HepG2 (cell line): ENCODE measurements at regions of chr9 and their contacts with region 1.

Region 1: GRCh38 chr9:78325343-78325742 is 28.4 kb downstream of the PSAT1 start:
- DNase-seq: no peak
- ATAC-seq: no peak; the same call in 2 of the 3 replicates
- H3K4me3 ChIP-seq: no peak overlapping the region
- H3K27ac ChIP-seq: no peak overlapping the region
- H3K4me1 ChIP-seq: peaks cover 7% of the 10 kb centered on the region
- H3K27me3 ChIP-seq: no peaks in the 10 kb centered on the region
- CTCF ChIP-seq: no peak
- EP300 ChIP-seq: no peak
- POLR2A ChIP-seq: no peak
- RAD21 ChIP-seq: no peak

Region 2: GRCh38 chr9:76835571-76836283 is 1489.6 kb before region 1 on chr9:
- CTCF ChIA-PET with region 1: no interaction called
- POLR2A ChIA-PET with region 1: no interaction called
- in situ Hi-C with region 1: no loop called
- intact Hi-C with region 1: no loop called
- DNase-seq: no peak
- ATAC-seq: no peak
- H3K4me3 ChIP-seq: no peak overlapping the region
- H3K27ac ChIP-seq: no peak overlapping the region
- H3K4me1 ChIP-seq: no peaks in the 10 kb centered on the region
- H3K27me3 ChIP-seq: no peaks in the 10 kb centered on the region
- CTCF ChIP-seq: no peak
- EP300 ChIP-seq: no peak
- POLR2A ChIP-seq: no peak
- RAD21 ChIP-seq: no peak

Region 3: GRCh38 chr9:78261403-78262001 is 63.8 kb before region 1 on chr9:
- CTCF ChIA-PET with region 1: no interaction called
- POLR2A ChIA-PET with region 1: no interaction called
- in situ Hi-C with region 1: no loop called
- intact Hi-C with region 1: loop called (anchors 5 kb)
- DNase-seq: peak; percentile 23
- ATAC-seq: no peak
- H3K4me3 ChIP-seq: no peak overlapping the region
- H3K27ac ChIP-seq: no peak overlapping the region
- H3K4me1 ChIP-seq: no peaks in the 10 kb centered on the region
- H3K27me3 ChIP-seq: no peaks in the 10 kb centered on the region
- CTCF ChIP-seq: peak; percentile 66
- EP300 ChIP-seq: no peak
- POLR2A ChIP-seq: no peak
- RAD21 ChIP-seq: peak; percentile 20; the same call in 1 of the 2 replicates

Region 4: GRCh38 chr9:78280982-78281668 is 44.2 kb before region 1 on chr9:
- CTCF ChIA-PET with region 1: no interaction called
- POLR2A ChIA-PET with region 1: interaction called, 3 read pairs
- in situ Hi-C with region 1: no loop called
- intact Hi-C with region 1: loop called (anchors 5 kb)
- DNase-seq: peak; percentile 35
- ATAC-seq: peak; percentile 81
- H3K4me3 ChIP-seq: no peak overlapping the region
- H3K27ac ChIP-seq: peak overlapping the region; percentile 51
- H3K4me1 ChIP-seq: peaks cover 50% of the 10 kb centered on the region
- H3K27me3 ChIP-seq: no peaks in the 10 kb centered on the region
- CTCF ChIP-seq: no peak
- EP300 ChIP-seq: no peak
- POLR2A ChIP-seq: no peak
- RAD21 ChIP-seq: no peak

Region 5: GRCh38 chr9:78507037-78507436 is 181.7 kb after region 1 on chr9:
- CTCF ChIA-PET with region 1: no interaction called
- POLR2A ChIA-PET with region 1: no interaction called
- in situ Hi-C with region 1: no loop called
- intact Hi-C with region 1: no loop called
- DNase-seq: no peak
- ATAC-seq: no peak
- H3K4me3 ChIP-seq: no peak overlapping the region
- H3K27ac ChIP-seq: no peak overlapping the region
- H3K4me1 ChIP-seq: no peaks in the 10 kb centered on the region
- H3K27me3 ChIP-seq: no peaks in the 10 kb centered on the region
- CTCF ChIP-seq: no peak
- EP300 ChIP-seq: no peak
- POLR2A ChIP-seq: no peak
- RAD21 ChIP-seq: no peak